ENCODE measurements at regions of chr1 and their contacts with region 1.

Region 1: GRCh38 chr1:158496374-158496773 is 24.4 kb downstream of the OR10R2 start:
- DNase-seq: no peak
- ATAC-seq: no peak
- H3K4me3 Mint-ChIP-seq: no peak overlapping the region
- H3K27ac Mint-ChIP-seq: no peak overlapping the region
- H3K4me1 Mint-ChIP-seq: no peaks in the 10 kb centered on the region
- H3K27me3 Mint-ChIP-seq: peaks cover 7% of the 10 kb centered on the region
- CTCF ChIP-seq: no peak

Region 2: DNA sequence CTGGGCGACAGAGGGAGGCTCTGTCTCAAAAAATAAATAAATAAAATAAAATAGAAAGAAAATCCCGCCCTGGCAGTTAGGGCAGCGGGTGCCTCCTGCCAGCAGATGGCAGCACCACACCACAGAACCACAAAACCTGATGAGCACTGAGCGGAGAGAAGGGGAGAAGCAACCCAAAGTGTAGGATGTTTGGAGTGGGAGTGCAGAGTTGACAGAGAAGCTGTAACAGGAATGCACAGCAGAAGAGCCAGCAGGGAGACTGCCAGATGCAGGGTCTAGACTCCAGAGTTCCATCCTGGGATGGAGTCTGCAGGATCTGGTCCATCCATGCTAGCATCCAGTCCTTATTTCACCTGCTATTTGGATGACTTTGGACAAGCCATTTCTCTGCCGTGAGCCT is 532.7 kb before region 1 on chr1:
- CTCF ChIA-PET with region 1: no interaction called
- POLR2A ChIA-PET with region 1: no interaction called
- intact Hi-C with region 1: loop called (anchors 1 kb)
- DNase-seq: peak; percentile 52
- ATAC-seq: peak; percentile 57
- H3K4me3 Mint-ChIP-seq: no peak overlapping the region
- H3K27ac Mint-ChIP-seq: no peak overlapping the region
- H3K4me1 Mint-ChIP-seq: no peaks in the 10 kb centered on the region
- H3K27me3 Mint-ChIP-seq: peaks cover 22% of the 10 kb centered on the region
- CTCF ChIP-seq: peak; percentile 80

Region 3: DNA sequence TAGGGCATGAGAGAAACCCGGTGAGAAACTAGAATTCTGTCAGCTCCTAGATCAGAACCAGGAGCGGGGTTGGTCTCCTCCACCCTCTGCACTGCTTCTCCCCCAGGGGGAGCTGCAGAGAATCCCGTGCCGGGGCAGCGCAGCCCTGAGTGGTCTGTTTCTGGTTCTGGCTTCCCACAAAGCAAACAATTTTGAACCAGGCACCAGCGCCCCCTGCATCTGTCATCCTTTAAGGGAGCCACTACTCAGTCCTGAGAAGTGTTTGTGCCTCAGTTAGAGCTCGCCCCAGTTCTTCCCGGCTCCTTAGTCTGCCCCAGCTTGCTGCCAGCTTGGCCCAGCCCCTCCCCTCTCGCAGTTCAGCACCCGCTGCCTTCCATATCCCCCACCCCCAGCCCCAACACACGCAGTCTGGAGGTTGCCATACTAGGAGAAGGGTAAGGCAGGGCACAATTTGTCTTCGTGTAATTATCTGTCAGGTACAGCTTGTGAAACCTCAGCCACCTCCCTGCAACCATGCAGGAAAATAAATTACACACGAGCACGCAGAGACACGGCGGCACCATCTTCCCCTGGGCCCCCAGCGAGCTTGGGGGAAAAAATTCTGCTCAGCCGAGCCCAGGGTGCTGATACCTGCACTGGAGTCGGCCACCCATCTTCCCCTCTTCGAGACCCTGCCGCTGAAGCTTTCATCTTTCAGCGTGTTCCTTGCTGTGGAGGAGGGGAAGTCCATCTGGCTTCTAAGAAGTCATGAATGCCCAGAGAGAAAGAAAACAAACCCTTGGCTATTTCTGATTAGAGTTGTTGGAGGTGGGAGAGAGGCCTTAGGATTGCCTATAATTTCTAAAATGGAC is 378.3 kb before region 1 on chr1:
- CTCF ChIA-PET with region 1: interaction called, 3 read pairs
- POLR2A ChIA-PET with region 1: no interaction called
- intact Hi-C with region 1: loop called (anchors 10 kb)
- DNase-seq: peak; percentile 45
- ATAC-seq: peak; percentile 60
- H3K4me3 Mint-ChIP-seq: peak overlapping the region; percentile 64
- H3K27ac Mint-ChIP-seq: no peak overlapping the region
- H3K4me1 Mint-ChIP-seq: peaks cover 27% of the 10 kb centered on the region
- H3K27me3 Mint-ChIP-seq: peaks cover 20% of the 10 kb centered on the region
- CTCF ChIP-seq: no peak

Region 4: GRCh38 chr1:158248118-158248517 is 248.3 kb before region 1 on chr1:
- CTCF ChIA-PET with region 1: interaction called, 10 read pairs
- POLR2A ChIA-PET with region 1: no interaction called
- intact Hi-C with region 1: loop called (anchors 1 kb)
- DNase-seq: peak; percentile 32
- ATAC-seq: peak; percentile 83
- H3K4me3 Mint-ChIP-seq: peak overlapping the region; percentile 26
- H3K27ac Mint-ChIP-seq: peak overlapping the region; percentile 59
- H3K4me1 Mint-ChIP-seq: peaks cover 51% of the 10 kb centered on the region
- H3K27me3 Mint-ChIP-seq: no peaks in the 10 kb centered on the region
- CTCF ChIP-seq: no peak

Region 5: DNA sequence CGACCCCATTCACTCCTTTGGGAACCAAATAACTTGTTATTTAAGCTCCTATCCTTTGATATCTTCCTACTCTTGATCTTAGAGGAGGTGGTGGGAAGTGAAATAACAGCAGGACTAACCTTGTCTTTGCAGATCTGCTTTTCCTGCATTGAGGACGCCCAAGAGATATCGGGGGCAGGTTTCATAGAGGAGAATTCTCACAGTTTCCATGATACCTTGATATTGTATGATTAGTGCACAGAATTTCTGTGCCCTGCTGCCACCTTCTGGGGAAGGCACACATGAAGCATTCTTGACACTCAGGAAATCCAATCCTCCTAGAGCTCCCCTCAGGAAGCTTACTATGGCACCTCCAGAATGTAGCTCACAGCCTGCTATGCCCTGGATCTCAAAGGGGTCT is 166.6 kb before region 1 on chr1:
- CTCF ChIA-PET with region 1: interaction called, 8 read pairs
- POLR2A ChIA-PET with region 1: no interaction called
- intact Hi-C with region 1: loop called (anchors 10 kb)
- DNase-seq: no peak
- ATAC-seq: peak; percentile 47
- H3K4me3 Mint-ChIP-seq: no peak overlapping the region
- H3K27ac Mint-ChIP-seq: no peak overlapping the region
- H3K4me1 Mint-ChIP-seq: peaks cover 26% of the 10 kb centered on the region
- H3K27me3 Mint-ChIP-seq: no peaks in the 10 kb centered on the region
- CTCF ChIP-seq: no peak

Region 6: DNA sequence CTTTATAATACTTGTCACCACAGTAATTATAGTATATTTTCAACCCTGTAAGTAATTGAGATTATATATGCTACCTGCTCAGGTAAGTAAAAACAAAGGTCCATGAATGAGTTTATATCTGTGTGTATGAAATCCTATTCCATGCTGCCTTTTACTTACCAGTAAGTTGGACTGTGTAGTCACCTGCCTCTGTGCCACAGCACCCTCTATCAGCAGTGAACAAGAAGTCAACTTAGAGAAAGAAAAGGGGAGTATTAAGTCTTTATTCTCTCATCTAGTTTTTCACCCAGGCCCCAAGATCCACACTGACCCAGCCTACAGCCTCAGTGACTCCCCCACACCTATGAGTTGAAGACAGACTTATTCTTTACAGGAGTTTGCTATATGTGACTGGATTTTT is 476.5 kb after region 1 on chr1:
- CTCF ChIA-PET with region 1: no interaction called
- POLR2A ChIA-PET with region 1: no interaction called
- intact Hi-C with region 1: no loop called
- DNase-seq: no peak
- ATAC-seq: no peak
- H3K4me3 Mint-ChIP-seq: no peak overlapping the region
- H3K27ac Mint-ChIP-seq: no peak overlapping the region
- H3K4me1 Mint-ChIP-seq: no peaks in the 10 kb centered on the region
- H3K27me3 Mint-ChIP-seq: no peaks in the 10 kb centered on the region
- CTCF ChIP-seq: no peak